Endothelial cell of umbilical vein (primary cell): ENCODE measurements at regions of chr15 and their contacts with region 1.

Region 1: DNA sequence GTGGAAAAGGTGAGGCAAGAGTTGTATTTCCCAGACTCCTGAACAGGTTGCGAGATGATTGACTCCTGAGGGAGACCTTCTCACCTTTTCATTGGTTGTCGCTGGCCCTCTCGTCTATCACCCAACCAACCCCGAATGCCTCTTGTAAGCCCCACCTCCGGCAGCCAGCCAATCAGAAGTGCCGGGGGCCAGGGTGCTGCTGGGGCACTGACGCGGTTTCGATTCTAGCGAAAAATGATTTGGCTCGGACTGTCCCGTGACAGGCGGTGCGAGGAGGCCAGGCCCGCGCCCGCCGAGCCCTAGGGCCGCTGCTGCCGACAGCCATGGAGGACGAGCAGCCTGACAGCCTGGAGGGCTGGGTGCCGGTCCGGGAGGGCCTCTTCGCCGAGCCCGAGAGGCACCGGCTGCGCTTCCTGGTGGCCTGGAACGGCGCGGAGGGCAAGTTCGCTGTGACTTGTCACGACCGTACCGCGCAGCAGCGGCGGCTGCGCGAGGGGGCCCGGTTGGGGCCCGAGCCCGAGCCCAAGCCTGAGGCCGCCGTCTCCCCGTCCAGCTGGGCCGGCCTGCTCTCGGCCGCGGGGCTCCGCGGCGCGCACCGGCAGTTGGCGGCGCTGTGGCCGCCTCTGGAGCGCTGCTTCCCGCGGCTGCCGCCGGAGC is at the start of gene WHAMM:
- DNase-seq: peak; percentile 98
- H3K4me3 ChIP-seq: peak within 1 kb of the TSS; percentile 76 to 90 (median 87)
- H3K27ac ChIP-seq: peak within 1 kb of the TSS; percentile 78
- H3K4me1 ChIP-seq: no peaks in the 10 kb centered on the region
- H3K27me3 ChIP-seq: peaks cover 0 to 4% of the 10 kb centered on the region in 2 experiments
- CTCF ChIP-seq: peak; percentile 4 to 10
- POLR2A ChIP-seq: peak; percentile 62
- total RNA-seq, gene WHAMM: 7.7 and 9.4 TPM in 2 replicates

Region 2: DNA sequence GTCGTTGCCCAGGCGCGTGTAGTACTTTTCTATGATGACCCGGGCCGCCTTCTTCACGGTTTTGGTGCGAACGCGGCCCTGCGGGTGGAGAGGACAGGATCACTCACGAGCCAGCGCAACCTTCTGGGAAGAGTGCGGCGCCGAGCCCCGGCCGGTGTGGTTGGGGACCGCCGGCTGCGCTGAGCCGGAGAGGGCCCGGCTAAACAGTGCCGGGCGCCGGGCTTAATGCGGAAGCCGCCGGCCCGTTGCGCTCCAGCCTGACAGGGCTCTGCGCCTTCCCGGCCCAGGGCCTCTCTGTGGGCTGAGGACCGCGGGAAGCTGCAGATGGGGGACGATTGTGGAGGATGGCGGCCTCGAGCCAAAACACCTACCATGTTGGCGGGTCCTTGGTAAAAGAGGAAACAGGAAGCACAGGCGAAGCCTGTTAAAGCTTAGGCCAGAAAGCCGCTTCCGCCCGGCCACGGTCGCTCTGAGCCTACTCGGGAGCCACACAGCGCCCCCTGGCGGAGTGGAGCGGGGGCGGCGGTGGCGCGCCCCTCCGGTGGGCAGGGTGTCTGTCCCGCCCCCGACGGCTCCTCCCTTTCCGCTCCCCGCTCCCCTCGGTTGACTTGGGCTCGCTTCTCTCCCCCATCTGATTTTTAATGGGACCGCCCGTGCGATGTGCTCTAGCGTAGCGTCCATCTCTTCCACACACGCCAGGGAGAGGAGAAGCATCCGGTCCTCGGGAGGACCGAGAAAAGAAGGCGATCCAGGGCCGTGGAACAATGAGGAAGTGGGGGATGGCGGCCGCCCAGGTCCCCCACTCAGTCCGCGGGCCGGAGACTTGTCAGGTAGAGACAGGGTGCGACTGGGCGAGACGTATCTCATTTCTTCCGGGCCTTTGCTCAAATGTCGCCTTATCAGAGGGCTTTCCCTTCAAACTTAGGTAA is 269.2 kb before region 1 on chr15 and contains the start of gene RPS17:
- CTCF ChIA-PET with region 1: interaction called, 4 read pairs
- POLR2A ChIA-PET with region 1: interaction called, 5 read pairs
- dilution Hi-C with region 1: no loop called
- intact Hi-C with region 1: loop called (anchors 2 kb)
- DNase-seq: peak; percentile 94
- H3K4me3 ChIP-seq: peak within 1 kb of the TSS; percentile 73 to 87 (median 86)
- H3K27ac ChIP-seq: peak within 1 kb of the TSS; percentile 56
- H3K4me1 ChIP-seq: peaks cover 17% of the 10 kb centered on the region
- H3K27me3 ChIP-seq: peaks cover 4 to 11% of the 10 kb centered on the region in 2 experiments
- CTCF ChIP-seq: peak; percentile 100
- POLR2A ChIP-seq: peak; percentile 99
- total RNA-seq, gene RPS17: 1,599 and 1,690 TPM in 2 replicates

Region 3: DNA sequence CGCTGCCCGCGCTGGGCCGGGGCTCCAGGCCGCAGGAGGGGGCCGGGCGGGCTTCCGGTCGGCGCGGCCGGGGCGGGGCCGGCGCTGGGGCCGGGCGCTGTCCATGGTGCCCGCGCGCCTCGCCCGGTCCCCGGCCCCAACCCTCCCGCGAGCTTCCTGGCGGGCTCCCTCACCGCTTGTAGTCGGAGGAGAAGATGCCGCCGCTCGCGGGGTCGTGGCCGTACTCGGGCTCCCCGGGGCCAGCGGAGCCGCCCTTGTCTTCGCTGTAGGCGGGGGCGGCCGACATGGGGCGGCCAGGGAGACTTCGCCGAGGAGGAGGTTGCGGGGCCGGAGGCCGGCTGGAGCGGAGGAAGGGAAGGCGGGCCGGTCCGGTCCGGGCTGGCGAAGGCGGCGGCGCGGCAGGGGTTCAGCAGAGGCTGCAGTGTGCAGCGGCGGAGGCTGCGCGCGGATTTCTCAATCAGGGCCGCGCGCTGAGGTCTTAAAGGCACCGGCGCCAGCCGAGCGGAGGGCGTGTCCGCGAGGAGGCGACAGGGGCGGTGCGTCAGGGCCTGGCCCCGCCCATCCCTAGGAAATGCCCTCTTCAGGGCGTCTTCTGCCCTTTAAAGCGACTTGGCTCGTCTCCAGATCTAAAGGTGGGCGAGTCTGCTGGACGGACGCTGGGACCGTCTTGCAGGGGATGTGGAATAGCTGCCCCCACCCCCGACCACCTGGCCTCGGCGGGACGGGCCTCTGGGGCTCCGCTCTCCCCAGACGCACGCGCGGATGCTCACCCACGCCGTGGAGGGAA is 99.9 kb before region 1 on chr15 and contains the start of gene AP3B2:
- CTCF ChIA-PET with region 1: no interaction called
- POLR2A ChIA-PET with region 1: no interaction called
- dilution Hi-C with region 1: no loop called
- intact Hi-C with region 1: loop called (anchors 1 kb)
- DNase-seq: peak; percentile 41
- H3K4me3 ChIP-seq: peak within 1 kb of the TSS; percentile 42 to 50 (median 45)
- H3K27ac ChIP-seq: no peak within 1 kb of the TSS
- H3K4me1 ChIP-seq: peaks cover 2% of the 10 kb centered on the region
- H3K27me3 ChIP-seq: no peaks in the 10 kb centered on the region
- CTCF ChIP-seq: no peak
- POLR2A ChIP-seq: no peak
- total RNA-seq, gene AP3B2: not detected in 2 replicates

Region 4: DNA sequence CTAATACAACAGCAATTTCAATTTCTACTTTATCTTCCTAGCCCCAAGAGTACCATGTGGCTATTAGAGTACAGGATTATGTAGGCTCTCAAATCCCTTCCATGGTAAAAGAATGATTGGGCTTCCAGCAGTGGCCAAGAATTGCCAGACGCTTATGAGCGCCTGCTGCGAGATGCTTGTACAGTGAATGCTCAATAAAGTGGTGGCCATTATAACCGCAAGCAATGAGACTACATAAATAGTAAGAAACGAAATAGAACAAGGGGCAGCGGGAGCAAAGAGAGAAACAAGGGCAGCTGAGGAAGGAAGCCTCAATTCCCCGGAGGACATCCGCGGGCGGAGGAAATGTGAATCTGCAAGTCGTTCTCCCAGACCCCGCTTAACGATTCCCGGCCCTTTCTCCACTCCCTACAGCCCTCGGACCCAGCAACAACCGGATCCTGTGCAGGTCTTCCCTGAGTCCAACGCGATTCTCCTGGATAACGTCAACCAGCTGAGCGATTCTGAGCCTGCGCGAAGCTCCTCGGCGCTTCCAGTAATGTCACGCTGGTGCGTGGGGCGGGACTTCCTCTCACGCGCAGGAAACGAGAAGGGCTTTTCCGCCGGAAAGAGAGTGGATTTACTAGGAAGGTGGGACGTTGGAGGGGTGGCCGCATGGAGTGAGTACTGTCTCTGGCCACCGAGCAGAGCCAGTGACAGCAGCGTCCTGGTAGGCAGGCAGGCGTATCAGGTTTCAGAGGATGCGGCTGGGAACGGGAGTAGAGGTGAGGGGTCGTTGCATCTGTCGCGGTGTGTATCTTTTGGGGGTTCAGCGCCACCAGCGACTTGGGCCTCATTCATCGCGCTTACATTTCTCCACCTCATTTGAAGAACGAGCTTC is 59.3 kb before region 1 on chr15:
- CTCF ChIA-PET with region 1: interaction called, 3 read pairs
- POLR2A ChIA-PET with region 1: interaction called, 3 read pairs
- dilution Hi-C with region 1: no loop called
- intact Hi-C with region 1: loop called (anchors 1 kb)
- DNase-seq: peak; percentile 95
- H3K4me3 ChIP-seq: peak overlapping the region; percentile 61 to 85 (median 80)
- H3K27ac ChIP-seq: peak overlapping the region; percentile 48
- H3K4me1 ChIP-seq: peaks cover 15% of the 10 kb centered on the region
- H3K27me3 ChIP-seq: no peaks in the 10 kb centered on the region
- CTCF ChIP-seq: no peak
- POLR2A ChIP-seq: peak; percentile 96

Region 5: DNA sequence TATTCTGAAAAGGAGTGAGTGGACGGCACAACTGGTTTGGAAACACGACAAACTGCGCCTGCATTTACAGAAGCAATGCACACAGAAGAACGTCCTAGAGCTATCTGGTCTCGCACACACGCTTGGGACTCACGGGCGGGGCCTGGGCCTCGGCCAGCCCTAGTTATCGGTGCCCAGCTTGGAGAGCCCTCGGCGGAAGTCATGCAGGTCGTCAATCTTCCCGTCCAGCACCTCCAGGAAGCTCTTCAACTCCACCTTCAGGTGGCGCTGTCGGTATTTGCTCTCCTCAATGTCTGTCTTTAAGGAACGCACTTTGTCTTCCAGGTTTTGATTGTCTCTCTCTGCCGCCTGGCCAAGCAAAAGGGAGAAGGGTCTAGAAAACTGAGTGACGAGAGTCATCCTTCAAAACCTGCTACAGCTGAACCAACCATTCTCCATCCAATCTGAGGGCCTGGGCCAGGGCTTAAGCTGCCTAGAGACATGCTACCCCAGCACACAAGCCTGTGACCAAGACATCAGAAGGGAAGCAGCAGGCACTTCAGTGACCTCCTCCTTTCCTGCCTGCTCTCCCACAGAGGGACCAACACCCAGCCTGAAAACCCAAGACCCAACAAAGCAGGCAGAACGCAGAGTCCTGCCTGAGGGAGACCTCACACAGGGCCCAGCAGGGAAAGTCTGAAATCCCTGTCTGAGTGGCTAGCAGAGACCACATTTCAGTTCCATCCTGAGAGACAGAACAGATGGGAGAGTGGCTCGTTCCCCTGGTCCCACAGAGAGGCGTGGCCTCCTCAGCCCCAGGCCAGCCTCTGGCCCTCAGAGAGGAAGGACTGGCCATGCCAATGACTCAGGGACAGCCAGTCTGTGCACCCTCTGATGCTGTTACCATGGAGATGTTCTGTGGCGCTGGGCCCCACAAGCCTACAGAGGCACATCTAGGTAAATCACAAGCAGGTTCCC is 40.3 kb after region 1 on chr15:
- CTCF ChIA-PET with region 1: interaction called, 6 read pairs
- POLR2A ChIA-PET with region 1: interaction called, 3 read pairs
- dilution Hi-C with region 1: no loop called
- intact Hi-C with region 1: loop called (anchors 2 kb)
- DNase-seq: peak; percentile 56
- H3K4me3 ChIP-seq: no peak overlapping the region
- H3K27ac ChIP-seq: no peak overlapping the region
- H3K4me1 ChIP-seq: no peaks in the 10 kb centered on the region
- H3K27me3 ChIP-seq: peaks cover 0 to 2% of the 10 kb centered on the region in 2 experiments
- CTCF ChIP-seq: peak; percentile 67 to 68
- POLR2A ChIP-seq: no peak

Region 6: GRCh38 chr15:82933576-82933975 is 124.0 kb after region 1 on chr15:
- CTCF ChIA-PET with region 1: no interaction called
- POLR2A ChIA-PET with region 1: no interaction called
- dilution Hi-C with region 1: no loop called
- intact Hi-C with region 1: no loop called
- DNase-seq: no peak
- H3K4me3 ChIP-seq: no peak overlapping the region
- H3K27ac ChIP-seq: no peak overlapping the region
- H3K4me1 ChIP-seq: no peaks in the 10 kb centered on the region
- H3K27me3 ChIP-seq: no peaks in the 10 kb centered on the region
- CTCF ChIP-seq: no peak
- POLR2A ChIP-seq: no peak

Region 7: DNA sequence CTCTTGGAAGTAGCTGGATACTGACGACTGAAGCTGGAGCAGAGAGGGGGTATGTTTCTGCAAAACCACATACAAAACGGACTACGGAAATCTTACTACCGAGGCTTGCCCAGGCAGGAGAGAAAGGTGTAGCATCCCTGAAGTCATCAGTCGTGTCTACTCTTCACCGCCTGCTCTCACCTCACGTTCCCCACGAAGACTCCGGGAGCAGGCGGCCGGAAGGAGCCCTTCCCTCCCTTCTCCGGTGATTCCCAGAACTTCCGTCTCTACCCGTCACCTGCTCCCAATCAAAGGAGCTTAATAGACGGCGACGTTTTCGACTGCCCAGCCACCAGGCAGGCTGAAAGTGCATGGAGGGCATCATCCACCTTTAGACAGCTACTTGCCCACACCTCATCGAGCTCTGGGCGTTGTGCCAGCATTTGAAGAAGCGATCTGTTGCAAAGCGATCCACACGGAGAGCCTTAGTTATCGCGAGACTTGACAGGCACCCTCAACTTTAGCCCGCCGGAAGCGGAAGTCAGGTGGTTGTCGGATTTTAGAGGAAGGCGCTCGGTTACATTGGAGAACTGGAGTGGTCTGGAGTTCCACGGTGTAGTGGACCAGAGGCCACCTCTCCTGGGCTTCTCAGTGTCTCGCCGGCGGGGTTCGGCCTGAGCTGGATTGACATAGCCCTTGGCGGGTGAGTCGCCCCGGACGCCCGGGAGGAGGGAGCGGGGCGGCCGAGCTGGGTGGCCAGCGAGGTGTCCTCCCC is 176.3 kb after region 1 on chr15 and contains the start of gene RAMAC:
- CTCF ChIA-PET with region 1: no interaction called
- POLR2A ChIA-PET with region 1: no interaction called
- dilution Hi-C with region 1: no loop called
- intact Hi-C with region 1: loop called (anchors 1 kb)
- DNase-seq: peak; percentile 92
- H3K4me3 ChIP-seq: peak within 1 kb of the TSS; percentile 65 to 88 (median 87)
- H3K27ac ChIP-seq: peak within 1 kb of the TSS; percentile 28
- H3K4me1 ChIP-seq: peaks cover 4% of the 10 kb centered on the region
- H3K27me3 ChIP-seq: no peaks in the 10 kb centered on the region
- CTCF ChIP-seq: no peak
- POLR2A ChIP-seq: peak; percentile 60
- total RNA-seq, gene RAMAC: 14.1 and 15.2 TPM in 2 replicates

Region 8: GRCh38 chr15:82999905-83000671 is 190.6 kb after region 1 on chr15:
- CTCF ChIA-PET with region 1: no interaction called
- POLR2A ChIA-PET with region 1: no interaction called
- dilution Hi-C with region 1: no loop called
- intact Hi-C with region 1: loop called (anchors 2 kb)
- DNase-seq: peak; percentile 71
- H3K4me3 ChIP-seq: peak overlapping the region in 2 of 3 experiments; percentile 36 to 38
- H3K27ac ChIP-seq: no peak overlapping the region
- H3K4me1 ChIP-seq: peaks cover 3% of the 10 kb centered on the region
- H3K27me3 ChIP-seq: no peaks in the 10 kb centered on the region
- CTCF ChIP-seq: peak; percentile 24 to 51
- POLR2A ChIP-seq: no peak